Panc1 (cell line): ENCODE measurements at regions of chr16 and their contacts with region 1.

Region 1: DNA sequence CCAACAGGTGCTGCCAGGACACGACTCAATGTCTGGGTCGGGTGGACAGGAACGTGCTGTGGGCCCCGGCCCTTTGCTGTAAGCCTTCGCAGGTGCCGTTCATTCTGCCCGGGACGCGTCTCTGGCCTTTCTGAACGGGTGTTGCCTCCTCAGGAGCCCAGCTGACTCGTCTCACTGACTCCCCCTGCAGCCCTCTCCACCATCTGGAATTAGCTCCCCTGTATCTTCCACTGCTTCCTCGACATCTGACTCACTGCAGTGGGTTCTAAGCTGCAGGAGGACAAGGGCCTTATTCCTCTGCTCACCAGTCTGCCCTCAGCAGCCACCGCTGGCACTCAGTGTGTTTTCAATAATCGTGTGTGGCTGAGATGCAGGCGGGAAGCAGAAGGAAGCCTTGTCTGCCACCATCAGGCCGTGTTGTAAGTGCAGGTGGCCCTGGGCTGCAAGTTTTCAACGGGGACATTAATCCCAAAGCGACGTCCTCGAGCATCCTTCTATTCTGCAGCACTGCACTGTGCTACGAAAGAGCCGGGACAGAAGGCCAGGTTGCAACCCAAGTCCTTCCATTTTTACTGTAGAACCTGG is 256.2 kb downstream of the FOXL1 start:
- DNase-seq: peak; percentile 47
- ATAC-seq: peak; percentile 89
- H3K4me3 ChIP-seq: no peak overlapping the region
- H3K27ac ChIP-seq: peak overlapping the region; percentile 39; the same call in 1 of the 2 replicates
- H3K4me1 ChIP-seq: peaks cover 6% of the 10 kb centered on the region
- H3K27me3 ChIP-seq: no peaks in the 10 kb centered on the region
- CTCF ChIP-seq: peak; percentile 80

Region 2: DNA sequence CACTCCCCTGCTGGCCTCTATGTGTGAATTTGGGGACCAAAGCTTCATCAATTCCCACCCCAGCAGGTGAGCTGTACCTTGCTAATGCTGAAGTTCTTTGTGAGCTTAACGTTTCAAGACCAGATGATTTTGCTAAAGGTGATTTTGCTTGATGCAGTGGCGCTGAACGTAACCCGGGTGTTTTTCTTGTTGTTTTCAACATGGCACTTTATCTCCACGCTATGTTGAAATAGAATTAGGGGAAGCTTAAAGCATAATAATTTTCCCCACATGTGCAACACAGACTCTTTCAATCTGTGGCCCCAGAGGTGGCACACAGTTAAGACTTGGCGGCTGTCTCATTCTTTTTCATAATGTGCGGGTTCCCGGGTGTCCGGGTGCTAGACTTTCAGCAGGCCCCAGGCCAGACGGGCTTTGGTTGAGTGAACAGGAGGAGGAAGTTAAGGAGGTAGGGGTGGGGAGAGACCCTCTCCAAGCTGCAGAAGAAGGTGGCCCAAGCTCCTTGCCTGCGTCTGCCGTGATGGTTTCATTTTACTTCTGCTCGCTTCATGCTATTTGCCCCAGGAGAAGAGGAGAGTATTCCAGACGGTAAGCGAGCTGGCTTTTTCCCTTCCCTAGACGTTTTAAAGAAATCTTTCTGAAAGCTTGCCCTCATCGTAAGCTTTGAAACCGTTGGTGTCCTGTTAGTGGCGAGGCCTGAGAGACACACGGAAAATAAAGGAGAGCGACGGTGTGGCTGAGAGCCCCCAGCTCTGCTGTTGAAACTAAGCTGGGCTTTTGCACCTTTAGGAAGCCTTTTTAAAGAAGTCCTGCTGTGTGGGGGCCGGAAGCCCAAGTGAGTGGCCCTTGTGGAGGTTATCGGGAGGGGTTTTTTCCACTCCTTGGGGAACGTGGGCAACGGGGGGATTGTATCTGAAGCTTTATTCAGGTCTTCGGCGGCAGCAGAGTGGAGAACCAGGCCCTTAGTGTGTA is 263.7 kb before region 1 on chr16:
- CTCF ChIA-PET with region 1: interaction called, 10 read pairs
- POLR2A ChIA-PET with region 1: no interaction called
- in situ Hi-C with region 1: no loop called
- intact Hi-C with region 1: loop called (anchors 5 kb)
- DNase-seq: no peak
- ATAC-seq: no peak
- H3K4me3 ChIP-seq: peak overlapping the region; percentile 63 to 86
- H3K27ac ChIP-seq: peak overlapping the region; percentile 97
- H3K4me1 ChIP-seq: peaks cover 41% of the 10 kb centered on the region
- H3K27me3 ChIP-seq: no peaks in the 10 kb centered on the region
- CTCF ChIP-seq: no peak